Upper lobe of right lung (tissue), 1 donor: ENCODE measurements at regions of chr12 and their contacts with region 1.

Region 1: DNA sequence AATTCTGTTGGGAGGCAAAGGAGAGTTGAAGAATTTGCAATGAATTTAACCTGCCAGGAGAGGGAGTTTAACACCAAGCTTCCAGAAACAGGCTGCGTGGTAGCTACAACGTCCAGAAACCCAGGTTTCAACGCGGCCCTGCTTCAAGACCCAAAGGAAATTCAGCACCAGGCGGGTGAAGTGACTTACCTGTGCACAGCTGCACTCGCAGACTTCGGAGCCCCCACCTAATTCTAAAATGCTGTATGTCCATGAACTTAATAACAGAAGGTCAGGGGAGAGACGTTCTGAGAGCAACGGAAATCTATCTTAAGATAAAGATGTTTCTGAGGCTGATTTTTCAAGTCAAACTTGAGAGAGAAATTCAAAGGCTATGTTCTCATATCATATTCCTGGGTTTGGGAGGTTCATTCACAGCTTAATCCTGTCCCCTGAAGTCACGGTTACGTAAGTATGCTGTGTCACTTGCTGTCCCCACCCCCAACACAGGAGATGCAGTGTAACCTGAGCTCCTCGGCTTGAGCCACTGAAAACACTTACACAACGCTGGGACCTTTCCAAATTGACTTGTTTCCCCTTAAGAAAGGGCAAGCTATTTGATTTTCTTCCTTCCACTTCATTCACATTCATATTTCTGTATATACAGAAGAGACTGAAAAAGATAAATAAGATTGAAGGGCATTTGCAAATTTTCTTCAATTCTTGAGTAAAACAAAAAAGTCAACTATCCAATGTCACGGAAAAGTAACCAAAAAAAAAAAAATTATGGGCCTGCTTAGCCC is 22.7 kb downstream of the CLIP1 start:
- DNase-seq: peak; percentile 75
- ATAC-seq: peak; percentile 91
- H3K4me3 ChIP-seq: peak overlapping the region; percentile 10
- H3K27ac ChIP-seq: peak overlapping the region; percentile 94
- H3K4me1 ChIP-seq: peaks cover 24% of the 10 kb centered on the region
- H3K27me3 ChIP-seq: no peaks in the 10 kb centered on the region
- CTCF ChIP-seq: peak; percentile 63

Region 2: DNA sequence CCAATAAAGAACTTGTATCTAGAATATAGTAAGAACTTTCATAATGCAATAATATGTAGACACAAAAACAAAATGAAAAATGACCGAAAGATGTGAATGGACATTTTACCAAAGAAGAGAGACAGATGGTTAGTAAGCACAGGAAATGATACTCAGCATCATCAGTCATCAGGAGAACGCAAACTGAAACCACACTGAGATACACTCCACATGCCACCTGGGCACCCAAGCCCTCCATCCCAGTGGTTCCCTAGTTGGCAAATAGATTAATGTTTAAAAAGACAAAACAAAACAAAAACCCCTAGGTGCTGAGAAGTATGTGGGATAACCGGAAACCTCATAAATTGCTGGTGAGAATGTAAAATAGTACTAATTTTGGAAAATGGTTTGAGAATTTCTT is 106.7 kb before region 1 on chr12:
- intact Hi-C with region 1: no loop called
- DNase-seq: no peak
- ATAC-seq: no peak
- H3K4me3 ChIP-seq: no peak overlapping the region
- H3K27ac ChIP-seq: no peak overlapping the region
- H3K4me1 ChIP-seq: no peaks in the 10 kb centered on the region
- H3K27me3 ChIP-seq: no peaks in the 10 kb centered on the region
- CTCF ChIP-seq: no peak

Region 3: GRCh38 chr12:122471324-122472226 is 71.8 kb after region 1 on chr12:
- intact Hi-C with region 1: loop called (anchors 2 kb)
- DNase-seq: no peak
- ATAC-seq: peak; percentile 82
- H3K4me3 ChIP-seq: no peak overlapping the region
- H3K27ac ChIP-seq: peak overlapping the region; percentile 53
- H3K4me1 ChIP-seq: peaks cover 6% of the 10 kb centered on the region
- H3K27me3 ChIP-seq: no peaks in the 10 kb centered on the region
- CTCF ChIP-seq: peak; percentile 82